ENCODE measurements at regions of chr12 and their contacts with region 1.

Region 1: DNA sequence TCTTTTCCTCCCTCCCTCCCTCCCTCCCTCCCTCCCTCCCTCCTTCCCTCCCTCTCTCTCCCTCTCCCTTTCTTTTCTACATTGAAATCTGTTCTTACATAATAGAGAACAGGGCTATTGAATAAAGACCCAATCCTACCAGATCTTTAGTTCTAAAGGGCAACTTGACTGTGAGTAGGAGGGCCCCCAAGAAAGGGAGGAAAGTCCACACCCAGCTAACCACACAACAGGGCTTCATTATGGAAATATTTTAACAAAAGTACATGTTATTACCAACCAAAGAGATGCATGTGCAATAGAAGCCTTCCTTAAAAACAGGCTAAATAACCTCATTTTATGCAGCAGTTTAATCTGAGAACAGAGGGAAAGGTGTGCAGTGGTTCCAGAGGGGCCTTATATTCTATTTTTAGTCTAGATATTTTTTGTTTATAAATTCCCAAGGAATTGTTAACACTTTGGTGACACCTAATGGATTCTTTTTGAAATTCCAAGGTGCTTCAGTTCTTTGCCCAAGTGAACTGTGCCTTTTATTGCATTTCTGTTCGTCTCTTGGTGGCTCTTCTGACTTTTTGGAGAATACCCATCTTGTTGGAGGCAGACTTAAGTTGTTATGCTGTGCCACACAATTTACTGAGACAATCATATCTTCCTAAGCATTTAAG is 63.0 kb downstream of the GNS start:
- DNase-seq: no peak
- H3K4me3 ChIP-seq: no peak overlapping the region
- H3K27ac ChIP-seq: no peak overlapping the region
- H3K4me1 ChIP-seq: peaks cover 0 to 9% of the 10 kb centered on the region in 2 donors
- H3K27me3 ChIP-seq: no peaks in the 10 kb centered on the region
- CTCF ChIP-seq: peak in 5 of 6 experiments; percentile 14 to 65 (median 50)
- POLR2A ChIP-seq: no peak

Region 2: GRCh38 chr12:64544371-64545080 is 151.7 kb before region 1 on chr12:
- intact Hi-C with region 1: loop called in 1 of 2 experiments (anchors 5 kb)
- DNase-seq: no peak
- H3K4me3 ChIP-seq: no peak overlapping the region
- H3K27ac ChIP-seq: no peak overlapping the region
- H3K4me1 ChIP-seq: no peaks in the 10 kb centered on the region
- H3K27me3 ChIP-seq: no peaks in the 10 kb centered on the region
- CTCF ChIP-seq: no peak
- POLR2A ChIP-seq: no peak

Region 3: DNA sequence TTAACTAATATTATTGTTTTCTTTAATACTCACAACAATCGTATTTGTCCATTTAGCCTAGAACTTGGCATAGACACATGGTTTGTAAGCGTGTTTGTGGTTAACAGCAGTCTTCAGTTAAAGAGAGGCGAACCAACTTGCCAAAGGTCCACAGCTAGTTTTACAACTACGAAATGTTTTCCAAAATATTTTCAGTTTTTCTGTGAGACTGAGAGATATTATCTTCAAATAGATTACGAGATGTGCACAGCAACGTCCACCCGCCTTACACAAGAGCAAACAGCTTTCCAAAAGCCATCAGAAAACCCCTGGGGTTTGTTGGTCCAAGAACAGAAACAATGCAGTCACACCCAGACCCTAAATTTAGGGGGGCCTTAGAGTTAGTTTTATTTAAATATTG is 144.5 kb before region 1 on chr12:
- intact Hi-C with region 1: loop called (anchors 5 kb)
- DNase-seq: no peak
- H3K4me3 ChIP-seq: no peak overlapping the region
- H3K27ac ChIP-seq: no peak overlapping the region
- H3K4me1 ChIP-seq: no peaks in the 10 kb centered on the region
- H3K27me3 ChIP-seq: no peaks in the 10 kb centered on the region
- CTCF ChIP-seq: no peak
- POLR2A ChIP-seq: no peak

Region 4: DNA sequence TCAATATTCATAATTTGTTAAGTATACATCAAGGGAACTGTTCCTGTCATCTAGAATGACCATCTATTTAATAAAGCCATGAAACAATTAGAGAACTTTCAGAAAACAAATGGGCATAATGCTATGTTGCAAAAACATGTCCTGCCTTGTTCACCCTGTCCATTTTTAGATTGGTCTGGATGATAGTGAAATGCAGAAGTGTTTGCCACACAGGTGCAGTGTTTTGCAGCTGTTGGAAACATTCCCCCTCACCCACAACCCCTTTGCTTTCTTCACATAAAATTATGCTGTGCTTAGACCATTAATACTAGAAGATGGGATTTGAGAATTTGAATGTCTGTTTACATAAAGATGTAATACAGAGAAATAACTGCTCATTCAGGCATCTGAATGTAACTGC is 509.7 kb after region 1 on chr12:
- intact Hi-C with region 1: no loop called
- DNase-seq: no peak
- H3K4me3 ChIP-seq: no peak overlapping the region
- H3K27ac ChIP-seq: no peak overlapping the region
- H3K4me1 ChIP-seq: peaks cover 4 to 10% of the 10 kb centered on the region in 2 donors
- H3K27me3 ChIP-seq: no peaks in the 10 kb centered on the region
- CTCF ChIP-seq: no peak
- POLR2A ChIP-seq: no peak

Measured in adrenal gland (tissue), 19 donors.